Left cardiac atrium (tissue), 4 donors: ENCODE measurements at regions of chr18 and their contacts with region 1.

Region 1: GRCh38 chr18:70454704-70455322 is 166.0 kb downstream of the SOCS6 start:
- DNase-seq: no peak
- ATAC-seq: peak in 1 of 2 donors; percentile 50

Region 2: GRCh38 chr18:70172225-70172624 is 282.6 kb before region 1 on chr18:
- intact Hi-C with region 1: loop called in 1 of 2 experiments (anchors 10 kb)
- DNase-seq: no peak
- ATAC-seq: no peak